ENCODE measurements at regions of chr10 and their contacts with region 1.

Region 1: DNA sequence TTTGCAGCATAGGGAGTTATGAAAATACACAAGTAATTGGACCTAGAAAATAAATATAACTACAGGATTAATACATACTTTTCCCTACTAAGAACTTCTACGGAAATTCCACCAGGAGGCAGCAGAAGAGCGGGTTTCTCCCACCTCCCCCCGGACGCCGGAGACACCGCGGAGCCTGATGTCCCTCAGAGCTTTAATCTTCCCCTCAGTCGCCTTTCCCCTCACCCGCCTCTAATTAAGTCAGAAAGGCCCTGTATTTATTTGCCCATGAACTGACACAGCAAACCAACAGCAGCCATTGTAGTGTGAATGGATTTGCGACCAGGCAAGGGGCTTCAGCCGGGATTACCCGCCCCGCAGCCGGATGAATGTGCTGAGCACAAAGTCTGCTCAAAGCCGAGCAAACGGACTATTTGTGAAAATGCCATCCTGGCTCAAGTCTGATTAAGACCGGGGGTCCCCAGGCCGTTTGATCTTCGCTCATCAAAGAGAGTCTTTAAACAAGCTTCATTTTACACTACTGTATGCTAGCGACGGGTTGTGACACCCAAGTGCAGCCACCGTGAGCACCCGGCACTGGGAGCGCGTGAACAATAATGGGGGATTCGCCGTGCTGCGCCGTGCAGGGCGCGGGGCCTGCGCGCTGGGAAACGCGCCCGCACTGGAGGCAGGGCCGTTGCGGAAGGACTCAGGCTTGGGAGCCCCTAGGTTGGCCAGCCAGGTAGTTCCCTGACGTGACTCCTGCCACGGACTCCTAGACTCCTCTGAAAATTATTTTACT is 5.6 kb upstream of the DKK1 start:
- DNase-seq: peak in 9 of 10 donors; percentile 56 to 95 (median 72)

Region 2: DNA sequence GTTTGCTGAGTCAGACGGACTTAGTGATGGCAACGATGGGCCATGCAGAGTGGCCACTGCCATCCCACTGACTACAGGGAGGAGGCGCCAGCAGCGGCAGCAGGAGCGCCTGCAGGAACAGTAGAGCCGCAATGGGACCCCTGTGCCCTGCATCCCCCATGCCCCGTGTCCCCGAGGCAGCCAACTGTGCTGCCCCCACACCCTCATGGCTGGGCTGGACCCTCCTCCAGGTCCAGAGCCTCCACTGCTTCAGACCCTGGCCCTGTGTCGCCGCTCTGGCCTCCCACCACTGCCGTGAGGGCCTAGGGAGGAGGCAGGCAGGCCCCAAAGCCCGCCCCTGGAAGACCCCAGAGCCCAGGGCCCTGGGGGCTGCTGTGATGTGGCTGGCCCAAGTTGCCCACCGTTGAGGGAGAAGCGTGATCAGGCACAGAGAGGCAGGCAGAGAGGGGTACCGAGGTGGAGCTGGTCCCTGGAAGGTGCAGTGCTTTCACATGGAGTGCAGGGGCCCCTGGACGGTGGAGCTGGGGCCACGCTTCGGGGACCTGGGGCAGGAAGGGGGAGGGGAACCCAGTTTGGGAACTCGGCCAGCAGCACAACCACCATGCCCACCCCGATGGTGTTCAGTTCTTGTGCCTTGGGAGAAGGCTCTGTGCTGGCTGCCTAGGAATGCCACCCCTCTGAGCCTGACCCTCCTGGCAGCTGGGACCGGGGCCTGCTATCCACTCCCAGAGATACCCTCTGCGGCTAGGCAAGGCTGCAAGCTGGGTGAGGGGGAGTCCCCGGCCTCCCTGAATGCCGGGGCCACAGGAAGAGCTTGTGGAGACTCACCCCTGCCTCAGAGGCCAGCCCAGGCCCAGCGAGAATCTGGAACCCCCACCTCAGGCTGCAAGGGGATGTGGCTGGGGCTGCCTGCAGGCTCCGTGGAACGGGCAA is 38.2 kb after region 1 on chr10:
- intact Hi-C with region 1: no loop called
- DNase-seq: peak in 2 of 10 donors; percentile 61 to 76

Region 3: DNA sequence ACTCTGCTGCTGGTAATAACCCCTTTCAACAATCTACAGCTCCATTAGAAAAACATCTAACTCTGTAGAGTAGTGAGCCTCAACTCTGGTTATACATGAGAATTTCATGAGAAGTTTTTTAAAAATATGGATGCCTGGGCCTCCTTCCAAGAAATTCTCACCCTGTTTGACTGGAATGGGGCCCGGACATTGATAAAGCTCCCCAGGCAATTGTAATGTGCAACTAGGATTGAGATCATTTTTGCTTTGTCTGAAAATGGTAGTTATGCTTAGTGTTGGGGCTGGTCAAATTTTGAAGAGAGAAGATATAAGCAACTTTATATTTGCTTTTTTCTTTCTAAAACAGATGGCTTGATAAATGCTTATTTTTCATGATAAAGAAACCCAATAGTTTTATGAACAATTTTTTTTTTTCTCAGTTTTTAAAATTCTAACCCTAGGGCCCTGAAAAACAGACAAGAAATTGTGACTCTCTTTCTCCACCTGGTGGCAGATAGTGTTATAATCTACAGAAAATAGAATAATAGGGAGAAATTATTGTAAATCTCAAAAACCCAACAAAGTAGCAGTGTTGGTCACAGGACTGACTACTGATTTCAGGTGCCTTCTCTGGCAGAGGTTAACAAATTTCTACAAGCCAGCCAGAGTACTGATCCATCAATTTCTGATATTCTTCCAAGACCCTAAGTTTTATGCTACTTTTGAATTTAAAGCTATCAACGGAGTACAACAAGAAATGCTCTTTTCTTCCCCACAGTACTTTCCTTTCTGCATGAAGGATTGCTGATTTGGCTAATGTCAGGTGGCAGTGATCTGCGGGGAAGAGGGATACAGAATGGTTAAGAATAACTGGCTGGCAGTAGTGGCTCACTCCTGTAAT is 180.4 kb after region 1 on chr10:
- intact Hi-C with region 1: loop called (anchors 1 kb)
- DNase-seq: no peak

Region 4: DNA sequence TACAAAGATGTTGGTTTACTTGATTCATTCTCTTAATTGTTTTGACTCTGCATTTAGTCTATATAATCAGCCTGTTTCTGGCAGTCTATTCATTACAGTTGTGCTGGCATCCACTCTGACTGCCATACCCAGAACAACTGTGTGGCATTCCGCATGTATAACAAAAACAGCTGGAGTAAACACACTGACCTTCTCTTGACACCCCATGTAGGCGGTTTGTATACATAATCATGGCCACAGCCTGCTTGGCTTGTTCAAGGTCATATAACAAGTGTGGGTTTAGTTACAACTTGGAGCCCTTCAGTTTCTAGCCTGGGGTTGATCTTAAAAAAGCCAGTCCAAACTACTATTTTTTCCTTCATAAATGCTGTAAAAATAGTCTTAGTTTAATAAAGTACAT is 393.2 kb after region 1 on chr10:
- intact Hi-C with region 1: no loop called
- DNase-seq: no peak

Region 5: DNA sequence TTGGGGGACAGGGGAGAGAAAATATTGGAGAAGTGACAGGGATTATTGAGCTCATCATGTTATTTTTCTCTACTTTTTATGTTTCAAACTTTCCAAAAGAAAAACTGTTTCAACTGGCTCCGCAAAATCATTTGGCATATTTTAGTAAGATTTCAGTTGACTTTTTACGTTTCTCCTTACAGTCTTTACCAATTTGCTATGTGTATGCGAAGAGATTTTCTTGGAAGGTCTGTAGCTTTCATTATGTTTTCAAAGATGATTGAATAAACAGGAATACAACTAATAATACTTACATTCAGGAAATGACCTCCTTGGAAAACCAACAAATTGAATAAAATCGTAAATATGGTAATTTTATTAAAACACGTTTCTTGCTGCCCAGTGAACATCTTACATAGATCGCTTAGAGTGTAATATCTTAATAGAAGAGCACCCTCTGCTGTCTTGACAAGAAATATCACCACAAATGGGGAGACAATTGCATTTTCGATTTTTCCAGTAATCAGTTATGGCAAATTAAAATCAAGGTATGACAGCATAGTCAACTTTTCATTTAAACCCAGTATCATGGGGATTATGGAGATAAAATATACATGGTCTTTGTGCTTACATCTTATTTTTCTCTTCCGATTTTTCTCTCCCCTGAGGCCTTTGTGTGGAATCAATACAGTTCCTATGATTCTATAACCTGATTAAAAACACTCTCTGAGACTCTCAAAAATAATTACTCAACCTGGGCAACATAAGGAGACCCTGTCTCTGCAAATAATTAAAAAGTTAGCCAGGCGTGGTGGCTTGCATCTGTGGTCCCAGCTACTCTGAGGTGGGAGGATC is 421.0 kb after region 1 on chr10:
- intact Hi-C with region 1: loop called (anchors 1 kb)
- DNase-seq: no peak

Region 6: GRCh38 chr10:52779541-52780390 is 471.3 kb after region 1 on chr10:
- intact Hi-C with region 1: loop called (anchors 1 kb)
- DNase-seq: peak; percentile 41 to 94 (median 78)